Dorsolateral prefrontal cortex (tissue), 120 donors: ENCODE measurements at regions of chr22 and their contacts with region 1.

Region 1: GRCh38 chr22:48500471-48501230 is 1327.0 kb downstream of the BRD1 start:
- DNase-seq: peak in 6 of 10 donors; percentile 55 to 79 (median 60)
- H3K4me3 ChIP-seq: no peak overlapping the region
- H3K27ac ChIP-seq: peak overlapping the region in 17 of 59 donors; percentile 5 to 51 (median 32)
- H3K27me3 ChIP-seq: no peaks in the 10 kb centered on the region
- CTCF ChIP-seq: no peak

Region 2: GRCh38 chr22:48380016-48380665 is 120.5 kb before region 1 on chr22:
- intact Hi-C with region 1: no loop called
- DNase-seq: peak in 3 of 10 donors; percentile 14 to 34 (median 16)
- H3K4me3 ChIP-seq: no peak overlapping the region
- H3K27ac ChIP-seq: no peak overlapping the region
- H3K27me3 ChIP-seq: peaks cover 0 to 8% (median 0%) of the 10 kb centered on the region in 45 donors
- CTCF ChIP-seq: no peak

Region 3: GRCh38 chr22:48554893-48555572 is 54.4 kb after region 1 on chr22:
- intact Hi-C with region 1: loop called in 1 of 2 experiments (anchors 5 kb)
- DNase-seq: no peak
- H3K4me3 ChIP-seq: no peak overlapping the region
- H3K27ac ChIP-seq: no peak overlapping the region
- H3K27me3 ChIP-seq: no peaks in the 10 kb centered on the region
- CTCF ChIP-seq: no peak

Region 4: GRCh38 chr22:48574776-48575565 is 74.3 kb after region 1 on chr22:
- intact Hi-C with region 1: no loop called
- DNase-seq: peak in 7 of 10 donors; percentile 31 to 83 (median 68)
- H3K4me3 ChIP-seq: peak overlapping the region in 23 of 59 donors; percentile 2 to 74 (median 33)
- H3K27ac ChIP-seq: peak overlapping the region in 51 of 59 donors; percentile 2 to 86 (median 65)
- H3K27me3 ChIP-seq: peaks cover 0 to 3% (median 0%) of the 10 kb centered on the region in 45 donors
- CTCF ChIP-seq: peak in 55 of 56 donors; percentile 21 to 84 (median 59)